ENCODE measurements at regions of chr16 and their contacts with region 1.

Region 1: DNA sequence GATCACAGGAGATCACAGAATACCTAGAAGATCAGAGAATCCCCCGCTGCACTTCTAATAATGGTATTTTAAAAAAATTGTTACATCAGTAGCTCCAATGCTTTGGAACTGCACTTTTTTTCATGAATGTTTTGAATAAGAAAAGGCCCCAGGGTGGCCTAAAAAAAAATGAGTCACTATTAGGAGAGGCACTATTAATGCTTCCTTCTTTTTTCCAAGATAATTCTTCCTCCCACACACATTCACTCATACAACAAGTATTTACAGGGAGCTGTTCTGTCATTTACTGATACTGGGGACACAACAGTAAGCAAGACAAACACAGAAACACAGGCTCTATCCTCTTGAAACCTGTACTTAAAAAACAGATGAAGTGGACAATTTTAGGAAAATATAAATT is 675 bp upstream of the PDZD9 start:
- DNase-seq: no peak
- H3K4me3 ChIP-seq: no peak overlapping the region
- H3K27ac ChIP-seq: no peak overlapping the region
- H3K4me1 ChIP-seq: peaks cover 0 to 10% (median 9%) of the 10 kb centered on the region in 4 donors
- H3K27me3 ChIP-seq: no peaks in the 10 kb centered on the region
- CTCF ChIP-seq: no peak
- EP300 ChIP-seq: no peak
- POLR2A ChIP-seq: no peak

Region 2: DNA sequence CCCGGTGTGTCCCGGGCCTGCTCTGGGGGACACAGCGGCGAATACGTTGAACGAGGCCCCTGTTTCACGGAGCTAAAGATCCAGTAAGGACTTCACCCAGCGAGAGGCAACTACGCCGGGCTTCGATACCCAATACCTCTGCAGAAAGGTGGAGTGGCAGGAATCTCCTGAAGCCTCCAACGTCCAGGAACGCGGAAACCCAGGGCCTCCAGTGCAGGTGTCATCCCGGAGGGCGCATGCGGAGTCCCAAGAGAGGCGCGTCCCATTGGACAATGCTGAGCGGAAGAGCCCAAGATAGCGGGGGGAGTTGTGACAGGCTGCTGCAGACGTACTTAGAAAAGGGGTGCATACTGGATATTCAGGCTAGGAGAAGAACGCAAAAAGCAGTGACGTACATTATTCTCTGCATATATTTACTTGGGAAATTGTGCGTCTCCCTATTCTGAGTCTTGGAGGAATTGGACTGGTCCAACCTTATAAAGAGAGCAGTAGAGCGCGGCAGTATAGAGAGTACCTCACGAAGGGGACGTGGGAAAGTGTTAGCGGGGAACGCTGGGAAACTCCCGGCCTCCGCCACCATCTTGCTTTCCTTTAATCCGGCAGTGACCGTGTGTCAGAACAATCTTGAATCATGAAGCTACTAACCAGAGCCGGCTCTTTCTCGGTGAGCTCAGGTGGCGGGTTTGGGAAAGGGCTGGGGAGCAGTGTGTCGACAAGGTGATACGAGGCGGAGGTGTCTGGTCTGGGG is 48.6 kb before region 1 on chr16 and contains the start of gene UQCRC2:
- intact Hi-C with region 1: no loop called
- DNase-seq: peak; percentile 93
- H3K4me3 ChIP-seq: peak within 1 kb of the TSS; percentile 78 to 91 (median 82)
- H3K27ac ChIP-seq: peak within 1 kb of the TSS; percentile 88 to 95 (median 90)
- H3K4me1 ChIP-seq: peaks cover 0 to 44% (median 36%) of the 10 kb centered on the region in 4 donors
- H3K27me3 ChIP-seq: no peaks in the 10 kb centered on the region
- CTCF ChIP-seq: no peak
- EP300 ChIP-seq: no peak
- POLR2A ChIP-seq: peak; percentile 59 to 90
- total RNA-seq, gene UQCRC2: 179 to 220 (median 205) TPM

Region 3: GRCh38 chr16:22077700-22078313 is 76.2 kb after region 1 on chr16:
- intact Hi-C with region 1: loop called (anchors 2 kb)
- DNase-seq: no peak
- H3K4me3 ChIP-seq: no peak overlapping the region
- H3K27ac ChIP-seq: no peak overlapping the region
- H3K4me1 ChIP-seq: peaks cover 0 to 5% (median 2%) of the 10 kb centered on the region in 4 donors
- H3K27me3 ChIP-seq: no peaks in the 10 kb centered on the region
- CTCF ChIP-seq: peak in 3 of 4 experiments; percentile 58 to 71 (median 66)
- EP300 ChIP-seq: no peak
- POLR2A ChIP-seq: no peak

Region 4: DNA sequence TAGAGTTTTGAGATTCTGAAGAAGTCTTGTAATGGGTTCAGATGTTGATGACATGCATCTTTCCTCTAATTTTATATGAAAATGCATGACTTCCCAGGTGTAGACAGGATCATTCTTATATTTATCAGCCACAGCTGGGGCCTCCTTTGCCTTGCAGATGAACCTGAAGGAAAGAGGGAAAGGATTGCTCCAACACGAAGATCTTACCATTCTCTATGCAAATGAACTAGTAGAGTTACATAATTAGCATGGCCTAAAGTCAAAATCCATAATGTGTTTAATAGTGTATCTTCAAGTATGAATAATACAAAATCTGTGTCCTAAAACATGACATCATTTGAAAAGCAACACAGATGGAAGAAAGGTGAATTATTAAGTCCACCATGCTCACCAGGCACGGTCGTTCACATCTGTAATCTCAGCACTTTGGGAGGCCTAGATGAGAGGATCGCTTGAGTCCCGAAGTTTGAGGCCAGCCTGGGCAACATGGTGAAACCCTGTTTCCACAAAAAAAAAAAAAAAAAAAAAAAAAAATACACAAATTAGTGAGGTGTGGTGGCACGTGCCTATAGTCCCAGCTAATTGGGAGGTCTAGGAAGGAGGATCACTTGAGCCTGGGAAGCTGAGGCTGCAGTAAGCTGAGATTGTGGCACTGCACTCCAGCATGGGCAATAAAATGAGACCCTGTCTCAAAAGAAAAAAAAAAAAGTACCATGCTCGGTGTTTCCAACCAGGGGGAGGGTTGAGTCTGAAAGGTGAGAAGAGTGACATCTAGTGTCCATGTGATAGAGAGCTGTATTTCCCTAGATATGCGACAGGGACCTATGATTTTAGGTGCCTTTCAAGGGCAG is 97.0 kb after region 1 on chr16:
- intact Hi-C with region 1: loop called (anchors 1 kb)
- DNase-seq: no peak
- H3K4me3 ChIP-seq: no peak overlapping the region
- H3K27ac ChIP-seq: no peak overlapping the region
- H3K4me1 ChIP-seq: no peaks in the 10 kb centered on the region
- H3K27me3 ChIP-seq: peaks cover 0 to 17% (median 0%) of the 10 kb centered on the region in 3 donors
- CTCF ChIP-seq: peak in 3 of 4 experiments; percentile 3 to 34 (median 27)
- EP300 ChIP-seq: no peak
- POLR2A ChIP-seq: no peak